AG04449 (cell line): ENCODE measurements at regions of chr6 and their contacts with region 1.

Region 1: GRCh38 chr6:159134701-159135364 is 34.4 kb upstream of the FNDC1 start:
- DNase-seq: no peak
- H3K4me3 ChIP-seq: no peak overlapping the region
- CTCF ChIP-seq: peak; percentile 86

Region 2: GRCh38 chr6:158704181-158704822 is 430.5 kb before region 1 on chr6:
- CTCF ChIA-PET with region 1: interaction called, 15 read pairs
- POLR2A ChIA-PET with region 1: no interaction called
- DNase-seq: no peak
- H3K4me3 ChIP-seq: peak overlapping the region; percentile 63
- CTCF ChIP-seq: peak; percentile 99

Region 3: GRCh38 chr6:159008656-159009288 is 126.1 kb before region 1 on chr6:
- CTCF ChIA-PET with region 1: interaction called, 177 read pairs
- POLR2A ChIA-PET with region 1: no interaction called
- DNase-seq: no peak
- H3K4me3 ChIP-seq: no peak overlapping the region
- CTCF ChIP-seq: peak; percentile 29

Region 4: DNA sequence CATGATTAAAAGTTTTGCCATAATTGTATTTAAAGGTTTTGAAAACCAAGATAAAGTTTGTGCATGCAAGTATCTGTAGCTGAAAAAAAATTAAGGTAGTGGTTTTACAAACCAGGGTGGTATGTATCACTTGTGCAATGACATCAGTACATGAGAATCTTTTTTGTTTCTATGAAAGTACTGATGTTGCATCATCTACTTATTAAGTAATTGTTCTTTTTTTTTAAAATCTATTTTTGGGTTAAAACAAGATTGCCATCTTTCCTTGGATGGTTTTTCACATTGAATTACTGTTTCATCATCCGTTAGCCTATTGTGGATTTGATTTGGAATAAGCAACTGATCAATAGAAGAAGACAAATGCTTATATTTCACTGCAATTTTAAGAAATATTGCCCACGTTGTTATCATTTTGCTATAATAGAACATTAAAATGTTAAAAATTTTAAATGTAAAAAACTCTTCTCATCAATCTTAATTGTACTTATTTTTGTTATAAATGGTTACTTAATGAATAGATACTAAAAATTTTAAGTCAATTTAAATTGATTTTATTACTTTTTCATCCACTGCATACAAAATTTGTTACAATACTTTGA is 50.2 kb before region 1 on chr6:
- CTCF ChIA-PET with region 1: no interaction called
- POLR2A ChIA-PET with region 1: no interaction called
- DNase-seq: peak; percentile 34
- H3K4me3 ChIP-seq: no peak overlapping the region
- CTCF ChIP-seq: no peak

Region 5: GRCh38 chr6:159104163-159104925 is 30.5 kb before region 1 on chr6:
- CTCF ChIA-PET with region 1: interaction called, 12 read pairs
- POLR2A ChIA-PET with region 1: no interaction called
- DNase-seq: no peak
- H3K4me3 ChIP-seq: no peak overlapping the region
- CTCF ChIP-seq: peak; percentile 92

Region 6: DNA sequence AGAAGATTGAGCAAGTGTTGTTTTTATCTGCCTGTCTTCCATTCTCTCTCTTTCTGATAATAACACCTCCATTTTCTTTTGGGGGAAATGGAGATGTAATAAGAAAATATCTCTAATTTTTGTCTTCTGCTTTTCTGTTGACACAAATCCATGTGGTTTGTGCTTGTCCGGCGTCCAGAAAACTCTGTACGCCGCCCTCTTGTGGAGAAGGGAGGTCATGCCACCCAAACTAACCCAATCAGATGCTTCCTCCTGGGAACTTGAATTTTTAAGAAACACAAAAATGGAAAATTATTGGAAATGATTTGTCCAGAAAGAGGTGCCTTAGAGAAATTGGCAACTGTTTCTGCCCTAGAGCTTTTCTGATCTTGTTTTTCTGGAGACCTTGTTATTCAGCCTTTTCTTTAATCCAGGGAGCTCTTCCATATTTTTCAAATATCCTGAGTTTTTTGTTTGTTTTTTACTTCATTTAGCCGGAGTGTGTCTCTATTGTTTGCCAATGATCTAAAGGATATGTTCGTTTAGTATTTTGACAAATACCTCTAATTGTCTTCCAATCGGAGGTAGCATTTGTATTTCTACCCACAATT is 16.5 kb after region 1 on chr6:
- CTCF ChIA-PET with region 1: interaction called, 89 read pairs
- POLR2A ChIA-PET with region 1: no interaction called
- DNase-seq: no peak
- H3K4me3 ChIP-seq: no peak overlapping the region
- CTCF ChIP-seq: peak; percentile 66